Right ventricle myocardium inferior (tissue), 1 donor: ENCODE measurements at regions of chr2 and their contacts with region 1.

Region 1: DNA sequence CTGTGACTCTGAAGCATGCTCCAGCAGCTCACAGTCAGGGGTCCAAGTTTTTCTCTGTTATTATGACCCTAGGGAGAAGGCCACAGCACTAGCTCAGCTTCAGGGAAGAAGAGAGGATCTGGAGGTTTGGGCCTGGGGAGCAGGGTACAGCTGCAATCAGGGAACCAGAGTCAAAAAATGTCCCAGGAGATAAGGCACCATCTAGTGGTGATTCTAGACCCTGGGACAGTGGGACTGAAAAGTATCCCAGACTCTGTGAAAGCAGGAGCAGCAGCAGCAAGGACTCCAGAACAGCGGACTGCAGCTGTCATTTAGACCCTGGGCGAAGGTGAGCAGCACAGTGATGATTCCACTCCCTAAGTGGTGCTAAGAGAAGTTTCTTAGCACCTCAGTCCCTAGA is 278.4 kb upstream of the DDX18 start:
- DNase-seq: no peak
- ATAC-seq: no peak

Region 2: DNA sequence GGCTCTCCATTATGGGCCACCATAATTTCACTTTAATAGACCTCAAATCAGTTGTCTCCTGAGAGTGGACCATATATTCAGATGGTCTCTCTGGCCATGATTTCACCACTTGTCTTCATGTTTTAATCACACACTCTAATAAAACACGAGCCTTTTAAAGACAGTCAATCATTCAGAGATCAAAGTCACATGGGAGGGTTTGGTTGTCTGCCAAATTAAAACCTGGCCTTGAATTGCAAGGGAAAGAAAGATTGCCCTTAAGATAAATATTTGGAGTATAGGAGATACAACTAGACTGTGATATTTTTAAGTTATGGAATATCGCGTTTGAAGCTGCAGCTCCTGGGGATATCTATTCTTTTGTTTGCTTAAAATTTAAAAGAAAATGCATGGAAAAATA is 99.4 kb before region 1 on chr2:
- intact Hi-C with region 1: no loop called
- DNase-seq: no peak
- ATAC-seq: no peak

Region 3: DNA sequence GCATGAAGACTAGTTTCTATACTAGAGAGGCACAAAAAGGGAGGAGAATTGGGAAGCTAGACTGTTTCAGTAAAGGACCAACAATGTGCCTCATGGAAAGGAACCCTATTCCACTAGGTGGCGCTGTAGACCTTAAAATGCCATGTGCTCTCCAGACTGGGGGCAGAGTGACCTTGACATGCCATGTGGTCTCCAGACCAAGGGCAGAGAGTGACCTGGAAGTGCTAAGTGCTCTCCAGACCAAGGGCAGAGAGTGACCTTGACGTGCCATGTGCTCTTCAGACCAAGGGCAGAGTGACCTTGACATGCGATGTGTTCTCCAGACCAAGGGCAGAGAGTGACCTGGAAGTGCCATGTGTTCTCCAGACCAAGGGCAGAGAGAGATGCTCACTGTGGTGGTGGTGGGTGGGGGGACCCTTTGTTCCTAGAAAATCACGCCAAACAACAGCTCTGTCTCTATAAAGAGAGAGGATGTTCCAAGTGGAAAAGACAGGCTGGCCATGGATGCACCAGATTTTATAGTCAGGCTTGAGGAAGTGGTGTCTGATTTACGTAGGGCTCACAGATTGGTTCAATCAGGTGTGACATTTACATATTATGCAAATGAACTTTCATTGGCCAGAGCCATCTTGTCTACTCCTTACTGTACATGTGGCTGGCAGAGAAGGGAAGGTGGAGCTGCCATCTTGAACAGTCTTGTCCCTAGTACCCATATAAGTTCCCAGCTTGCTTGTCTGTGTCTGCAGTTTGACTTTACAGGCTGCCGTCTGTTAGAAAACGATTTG is 65.6 kb before region 1 on chr2:
- intact Hi-C with region 1: loop called (anchors 5 kb)
- DNase-seq: no peak
- ATAC-seq: no peak

Region 4: DNA sequence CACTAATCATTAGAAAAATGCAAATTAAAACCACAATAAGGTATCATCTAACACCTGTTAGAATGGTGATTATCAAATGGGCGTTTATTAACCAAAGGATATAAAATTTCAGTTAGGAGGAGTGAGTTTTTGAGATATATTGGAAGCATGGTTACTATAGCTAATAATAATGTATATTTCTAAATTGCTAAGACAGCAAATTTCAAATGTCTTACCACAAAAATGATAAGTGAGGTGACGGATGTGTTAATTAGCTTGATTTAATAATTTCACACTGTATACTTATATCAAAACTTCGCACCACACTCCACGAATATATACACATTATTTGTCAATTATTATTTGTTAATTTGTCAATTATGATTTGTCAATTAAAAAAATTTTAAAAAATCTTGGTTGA is 51.2 kb after region 1 on chr2:
- intact Hi-C with region 1: no loop called
- DNase-seq: no peak
- ATAC-seq: no peak